Activated CD4-positive, alpha-beta T cell treated with anti-CD3 and anti-CD28 coated beads for 36 hours (primary cell): ENCODE measurements at regions of chr17 and their contacts with region 1.

Region 1: DNA sequence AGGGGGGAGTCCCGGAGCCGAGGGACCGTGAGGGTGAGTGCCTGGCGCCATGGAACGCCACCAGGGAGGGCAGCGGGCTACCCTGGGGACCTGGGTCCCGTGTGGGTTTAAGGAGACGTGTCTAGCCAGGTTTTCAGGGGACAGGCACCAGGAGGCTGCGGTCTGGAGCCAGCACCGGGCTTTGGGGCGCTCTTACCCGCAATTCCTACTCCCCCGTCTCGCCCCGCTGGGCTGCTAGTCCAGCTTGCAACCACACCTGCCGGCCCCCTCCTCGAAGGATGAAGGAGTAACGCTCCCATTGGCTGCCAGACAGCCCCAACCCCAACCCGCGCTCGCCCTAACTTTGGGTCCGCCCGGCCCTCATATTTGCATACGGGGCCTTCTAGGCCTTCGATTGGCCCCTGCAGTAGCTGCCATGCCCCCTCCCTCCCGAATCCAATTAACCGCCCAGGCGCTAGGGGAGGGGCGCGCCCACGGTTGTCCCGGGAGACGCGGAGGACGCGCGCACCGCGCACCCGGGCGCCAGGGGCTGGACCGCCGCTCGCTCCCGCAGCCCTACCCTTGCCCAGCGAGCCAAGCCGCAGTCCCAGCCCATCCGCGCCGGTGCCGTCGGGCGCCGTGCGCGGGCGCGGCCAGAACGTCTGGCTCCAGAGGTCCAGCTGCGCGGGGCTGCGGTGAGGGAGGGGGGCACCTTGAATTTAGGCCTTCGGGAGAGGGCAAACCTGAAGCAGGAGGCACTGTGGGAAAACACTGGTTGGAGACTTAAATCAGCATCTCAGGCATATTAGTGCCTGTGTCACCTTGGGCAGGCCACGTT is at the start of gene TTLL6:
- DNase-seq: peak; percentile 80
- ATAC-seq: peak; percentile 93
- H3K4me3 Mint-ChIP-seq: peak within 1 kb of the TSS; percentile 63
- H3K27ac Mint-ChIP-seq: no peak within 1 kb of the TSS
- H3K4me1 Mint-ChIP-seq: peaks cover 15% of the 10 kb centered on the region
- H3K27me3 Mint-ChIP-seq: peaks cover 35% of the 10 kb centered on the region
- total RNA-seq, gene TTLL6: not detected

Region 2: DNA sequence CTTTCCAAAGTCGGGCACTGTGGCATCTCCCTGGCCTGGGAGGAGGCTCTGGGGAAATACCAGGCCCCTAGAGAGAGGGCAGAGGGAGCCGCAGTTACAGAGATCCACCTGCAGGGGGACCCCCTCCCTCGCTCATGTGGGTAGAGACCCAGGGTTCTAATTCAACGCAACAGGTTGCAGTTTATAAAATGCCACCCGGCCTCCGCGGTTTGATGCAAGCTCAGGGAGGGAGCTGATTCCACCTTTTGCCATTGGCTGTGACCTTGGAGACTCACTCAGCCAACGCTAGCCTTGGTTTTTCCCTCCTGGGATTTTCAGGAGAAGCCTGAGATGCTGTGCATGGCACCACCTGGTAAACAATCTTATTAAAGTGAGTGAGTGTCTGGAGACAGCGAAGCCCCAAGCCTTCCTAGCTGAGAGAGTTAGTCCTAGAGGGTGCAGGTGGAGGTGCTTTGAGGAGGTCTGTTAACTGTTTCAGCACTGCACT is 12.0 kb before region 1 on chr17:
- CTCF ChIA-PET with region 1: interaction called, 21 read pairs
- POLR2A ChIA-PET with region 1: no interaction called
- intact Hi-C with region 1: no loop called
- DNase-seq: peak; percentile 82
- ATAC-seq: peak; percentile 78
- H3K4me3 Mint-ChIP-seq: no peak overlapping the region
- H3K27ac Mint-ChIP-seq: no peak overlapping the region
- H3K4me1 Mint-ChIP-seq: peaks cover 2% of the 10 kb centered on the region
- H3K27me3 Mint-ChIP-seq: peaks cover 9% of the 10 kb centered on the region

Region 3: GRCh38 chr17:48841395-48841831 is 24.4 kb after region 1 on chr17:
- CTCF ChIA-PET with region 1: interaction called, 8 read pairs
- POLR2A ChIA-PET with region 1: interaction called, 3 read pairs
- intact Hi-C with region 1: loop called (anchors 1 to 2 kb)
- DNase-seq: peak; percentile 64
- ATAC-seq: peak; percentile 92
- H3K4me3 Mint-ChIP-seq: peak overlapping the region; percentile 27
- H3K27ac Mint-ChIP-seq: peak overlapping the region; percentile 51
- H3K4me1 Mint-ChIP-seq: peaks cover 57% of the 10 kb centered on the region
- H3K27me3 Mint-ChIP-seq: peaks cover under 1% of the 10 kb centered on the region

Region 4: GRCh38 chr17:48850792-48851323 is 33.9 kb after region 1 on chr17:
- CTCF ChIA-PET with region 1: interaction called, 11 read pairs
- POLR2A ChIA-PET with region 1: no interaction called
- intact Hi-C with region 1: no loop called
- DNase-seq: no peak
- ATAC-seq: no peak
- H3K4me3 Mint-ChIP-seq: no peak overlapping the region
- H3K27ac Mint-ChIP-seq: no peak overlapping the region
- H3K4me1 Mint-ChIP-seq: peaks cover 2% of the 10 kb centered on the region
- H3K27me3 Mint-ChIP-seq: no peaks in the 10 kb centered on the region

Region 5: DNA sequence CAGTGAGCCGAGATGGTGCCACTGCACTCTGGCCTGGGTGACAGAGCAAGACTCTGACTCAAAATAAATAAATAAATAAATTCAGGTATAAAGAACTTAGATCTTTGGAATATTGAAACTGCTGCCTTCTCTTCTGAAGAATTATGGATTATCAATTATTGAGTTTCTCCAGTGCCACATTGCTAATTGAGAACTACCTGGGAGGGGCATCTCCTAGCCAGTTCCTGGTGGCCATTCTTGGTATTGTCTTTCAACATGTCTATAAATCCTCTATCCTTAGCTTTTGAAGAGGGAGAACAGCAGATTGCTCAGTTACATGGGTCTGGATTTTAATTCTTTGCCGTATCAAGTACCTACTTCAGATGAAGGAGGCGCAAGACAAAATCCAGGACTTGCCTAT is 43.1 kb after region 1 on chr17:
- CTCF ChIA-PET with region 1: interaction called, 11 read pairs
- POLR2A ChIA-PET with region 1: no interaction called
- intact Hi-C with region 1: no loop called
- DNase-seq: no peak
- ATAC-seq: no peak
- H3K4me3 Mint-ChIP-seq: no peak overlapping the region
- H3K27ac Mint-ChIP-seq: no peak overlapping the region
- H3K4me1 Mint-ChIP-seq: no peaks in the 10 kb centered on the region
- H3K27me3 Mint-ChIP-seq: no peaks in the 10 kb centered on the region

Region 6: DNA sequence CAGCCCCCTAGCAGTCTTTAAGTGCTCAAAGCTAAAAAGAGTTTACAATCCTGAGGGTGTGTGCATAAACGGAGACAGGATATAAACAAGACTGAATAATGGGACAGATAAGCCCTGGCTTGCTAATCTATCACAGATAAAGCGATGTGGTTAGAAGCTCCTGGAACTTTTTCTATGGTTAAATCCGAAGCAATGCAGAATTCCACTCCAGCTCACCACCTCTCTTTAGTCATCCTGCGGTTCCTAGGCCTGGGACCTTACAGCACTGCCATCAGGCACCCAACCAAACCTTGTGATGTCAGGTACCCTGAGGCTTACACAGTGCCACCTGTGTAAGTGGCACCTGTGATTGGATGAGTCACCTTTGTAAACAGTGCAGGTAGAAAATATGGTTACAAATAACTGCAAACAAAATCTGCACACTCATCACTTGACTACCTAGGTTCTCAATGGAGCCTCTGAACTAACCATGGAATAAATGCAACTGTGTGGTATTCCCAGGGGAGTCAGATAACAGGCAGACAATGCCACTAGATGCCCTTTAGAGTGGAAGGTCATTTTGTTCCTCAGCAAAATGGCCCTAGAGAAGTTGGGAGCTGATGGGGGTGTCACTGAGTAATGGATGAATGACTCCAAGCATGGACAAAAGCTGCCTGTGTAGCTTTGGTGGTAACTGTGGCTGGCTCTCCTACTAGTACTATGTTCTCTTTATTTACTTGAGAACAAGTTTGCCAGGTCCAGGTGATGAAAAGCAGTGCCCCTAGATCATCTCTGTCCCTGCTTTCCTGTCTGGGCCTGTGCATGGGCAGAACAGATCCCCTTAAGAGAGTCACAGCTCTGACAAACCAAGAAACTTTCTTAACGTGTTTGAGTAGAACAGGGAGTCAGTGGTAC is 284.3 kb after region 1 on chr17:
- CTCF ChIA-PET with region 1: no interaction called
- POLR2A ChIA-PET with region 1: no interaction called
- intact Hi-C with region 1: no loop called
- DNase-seq: no peak
- ATAC-seq: no peak
- H3K4me3 Mint-ChIP-seq: no peak overlapping the region
- H3K27ac Mint-ChIP-seq: no peak overlapping the region
- H3K4me1 Mint-ChIP-seq: no peaks in the 10 kb centered on the region
- H3K27me3 Mint-ChIP-seq: peaks cover 4% of the 10 kb centered on the region